Lower leg skin (tissue), 4 donors: ENCODE measurements at regions of chr12 and their contacts with region 1.

Region 1: DNA sequence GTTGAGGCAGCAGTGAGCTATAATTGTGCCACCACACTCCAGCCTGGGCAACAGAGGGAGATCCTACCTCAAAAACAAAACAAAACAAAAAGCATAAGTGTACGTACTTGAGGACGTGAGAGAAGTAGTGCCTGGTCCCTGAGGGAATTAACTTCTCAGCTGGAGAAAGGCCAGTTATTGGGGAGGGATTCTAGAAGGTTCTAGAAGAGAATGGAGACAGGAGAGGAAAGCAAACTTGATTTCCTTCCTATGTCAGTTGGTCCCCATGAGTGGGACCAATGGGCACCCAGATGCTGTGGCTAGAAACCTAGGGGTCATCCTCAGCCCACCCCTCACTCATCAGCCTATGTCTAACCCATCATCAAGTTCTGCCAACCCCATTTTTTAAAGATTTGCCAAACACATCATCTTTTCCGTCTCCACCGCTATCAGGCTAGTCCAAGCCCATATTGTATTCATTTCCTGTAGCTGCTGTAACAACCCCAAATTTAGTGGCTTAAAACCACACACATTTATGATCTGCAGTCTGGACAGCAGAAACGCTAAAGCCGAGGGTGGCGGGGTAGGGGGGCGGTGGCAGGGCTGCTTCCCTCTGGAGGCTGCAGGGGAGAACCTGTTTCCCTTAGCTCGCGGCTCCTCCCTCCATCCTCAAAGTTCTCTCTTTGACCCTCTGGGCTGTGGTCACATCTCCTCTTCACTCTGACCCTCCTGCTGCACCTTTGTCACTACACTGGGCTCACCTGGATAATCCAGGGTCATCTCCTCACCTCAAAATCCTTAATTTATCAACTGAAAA is 7.2 kb upstream of the RBM19 start:
- DNase-seq: no peak
- H3K4me3 ChIP-seq: no peak overlapping the region
- CTCF ChIP-seq: no peak
- POLR2A ChIP-seq: no peak

Region 2: DNA sequence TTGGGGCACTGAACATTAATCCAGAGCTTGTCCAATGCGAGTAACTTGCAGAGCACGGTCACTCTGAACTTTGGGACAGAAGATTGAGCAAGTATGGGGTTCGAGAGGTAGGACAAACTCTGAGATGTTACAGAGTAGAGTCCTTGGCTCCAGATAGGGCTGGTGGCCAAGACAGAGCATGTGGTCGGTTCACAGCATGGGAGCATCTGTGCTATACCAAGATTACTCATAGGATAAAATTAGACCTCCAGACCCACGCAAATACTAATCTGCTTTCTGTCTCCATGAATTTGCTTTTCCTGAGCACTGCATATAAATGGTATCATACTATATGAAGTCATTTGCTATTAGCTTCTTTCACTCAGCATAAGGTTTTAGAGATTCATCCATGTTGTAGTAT is 526.0 kb after region 1 on chr12:
- intact Hi-C with region 1: loop called (anchors 10 kb)
- DNase-seq: no peak
- H3K4me3 ChIP-seq: no peak overlapping the region
- CTCF ChIP-seq: no peak
- POLR2A ChIP-seq: no peak